ENCODE measurements at regions of chr12 and their contacts with region 1.

Region 1: GRCh38 chr12:94012590-94012989 is 135.8 kb upstream of the PLXNC1 start:
- DNase-seq: no peak
- ATAC-seq: no peak
- H3K4me3 ChIP-seq: no peak overlapping the region
- H3K4me3 Mint-ChIP-seq: no peak overlapping the region
- H3K27ac ChIP-seq: no peak overlapping the region
- H3K27ac Mint-ChIP-seq: no peak overlapping the region
- H3K4me1 ChIP-seq: peaks cover 6% of the 10 kb centered on the region
- H3K4me1 Mint-ChIP-seq: peaks cover 14% of the 10 kb centered on the region
- H3K27me3 ChIP-seq: no peaks in the 10 kb centered on the region
- H3K27me3 Mint-ChIP-seq: no peaks in the 10 kb centered on the region
- CTCF ChIP-seq: no peak

Region 2: GRCh38 chr12:93990832-93991803 is 21.5 kb before region 1 on chr12:
- CTCF ChIA-PET with region 1: no interaction called
- POLR2A ChIA-PET with region 1: no interaction called
- intact Hi-C with region 1: no loop called
- DNase-seq: no peak
- ATAC-seq: no peak
- H3K4me3 ChIP-seq: no peak overlapping the region
- H3K4me3 Mint-ChIP-seq: no peak overlapping the region
- H3K27ac ChIP-seq: no peak overlapping the region
- H3K27ac Mint-ChIP-seq: no peak overlapping the region
- H3K4me1 ChIP-seq: no peaks in the 10 kb centered on the region
- H3K4me1 Mint-ChIP-seq: no peaks in the 10 kb centered on the region
- H3K27me3 ChIP-seq: no peaks in the 10 kb centered on the region
- H3K27me3 Mint-ChIP-seq: peaks cover 2% of the 10 kb centered on the region
- CTCF ChIP-seq: no peak

Region 3: GRCh38 chr12:94033101-94033500 is 20.5 kb after region 1 on chr12:
- CTCF ChIA-PET with region 1: interaction called, 3 read pairs
- POLR2A ChIA-PET with region 1: interaction called, 4 read pairs
- intact Hi-C with region 1: loop called in 1 of 2 experiments (anchors 2 kb)
- DNase-seq: peak in 2 of 9 experiments; percentile 25 to 50
- ATAC-seq: peak; percentile 81
- H3K4me3 ChIP-seq: no peak overlapping the region
- H3K4me3 Mint-ChIP-seq: peak overlapping the region; percentile 54
- H3K27ac ChIP-seq: no peak overlapping the region
- H3K27ac Mint-ChIP-seq: peak overlapping the region; percentile 71
- H3K4me1 ChIP-seq: peaks cover 36% of the 10 kb centered on the region
- H3K4me1 Mint-ChIP-seq: peaks cover 40% of the 10 kb centered on the region
- H3K27me3 ChIP-seq: no peaks in the 10 kb centered on the region
- H3K27me3 Mint-ChIP-seq: peaks cover 3% of the 10 kb centered on the region
- CTCF ChIP-seq: no peak

Region 4: DNA sequence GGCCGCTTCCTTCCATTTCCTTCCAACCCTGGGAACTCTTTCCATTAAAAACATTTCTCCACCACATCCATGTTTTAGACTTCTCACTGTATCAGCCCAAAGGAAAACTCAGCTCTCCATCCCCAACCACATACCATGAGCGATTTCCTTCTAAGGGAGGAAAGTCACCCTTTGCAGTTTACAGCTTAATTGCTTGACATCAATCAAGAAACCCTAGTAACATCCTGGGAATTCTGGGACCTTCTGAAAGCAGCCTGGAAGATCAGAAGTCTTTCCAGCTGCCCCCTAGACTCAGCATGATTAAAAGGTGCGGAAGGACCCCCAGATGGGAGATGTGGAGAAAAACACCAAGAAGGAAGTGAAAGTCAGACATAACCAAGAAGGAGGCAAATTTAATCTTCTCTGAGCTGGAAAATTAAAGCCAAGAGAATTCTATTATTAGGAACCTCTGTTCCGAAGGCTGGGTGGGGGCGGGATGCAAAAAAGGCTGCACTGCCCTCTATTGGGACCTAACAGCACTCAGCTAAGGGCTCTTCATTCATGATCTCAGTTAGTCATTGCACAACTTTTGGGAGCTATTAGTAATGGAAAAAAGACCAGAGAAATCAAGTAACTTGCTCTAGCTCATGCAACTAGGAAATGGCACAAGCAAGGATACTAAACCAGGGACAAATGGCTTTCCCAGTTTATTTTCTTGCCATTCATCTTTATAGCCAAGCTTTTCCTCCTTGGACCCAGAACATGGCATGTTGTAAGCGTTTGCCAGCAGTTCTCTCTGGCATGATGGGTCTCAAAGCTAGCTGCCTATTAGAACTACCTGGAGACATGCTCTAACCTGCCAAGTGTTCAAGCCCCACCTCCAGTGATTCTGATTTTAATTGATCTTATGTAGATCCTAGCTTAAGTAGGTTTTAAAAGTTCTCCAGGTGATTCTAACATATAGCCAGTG is 62.7 kb after region 1 on chr12:
- CTCF ChIA-PET with region 1: no interaction called
- POLR2A ChIA-PET with region 1: no interaction called
- intact Hi-C with region 1: loop called in 1 of 2 experiments (anchors 10 kb)
- DNase-seq: peak in 2 of 9 experiments; percentile 13 to 38
- ATAC-seq: no peak
- H3K4me3 ChIP-seq: no peak overlapping the region
- H3K4me3 Mint-ChIP-seq: no peak overlapping the region
- H3K27ac ChIP-seq: no peak overlapping the region
- H3K27ac Mint-ChIP-seq: no peak overlapping the region
- H3K4me1 ChIP-seq: peaks cover 6% of the 10 kb centered on the region
- H3K4me1 Mint-ChIP-seq: peaks cover 15% of the 10 kb centered on the region
- H3K27me3 ChIP-seq: no peaks in the 10 kb centered on the region
- H3K27me3 Mint-ChIP-seq: peaks cover 10% of the 10 kb centered on the region
- CTCF ChIP-seq: peak; percentile 17

Measured in CD8-positive, alpha-beta T cell (primary cell).